Heart left ventricle (tissue), 16 donors: ENCODE measurements at regions of chr3 and their contacts with region 1.

Region 1: GRCh38 chr3:42831321-42831713 is 22.1 kb downstream of the ACKR2 start:
- DNase-seq: peak; percentile 53 to 74 (median 63)
- ATAC-seq: peak; percentile 29 to 66 (median 57)
- H3K4me3 ChIP-seq: no peak overlapping the region
- H3K27ac ChIP-seq: no peak overlapping the region
- H3K4me1 ChIP-seq: peaks cover 0 to 8% (median 0%) of the 10 kb centered on the region in 12 donors
- H3K27me3 ChIP-seq: no peaks in the 10 kb centered on the region
- CTCF ChIP-seq: peak; percentile 62 to 83 (median 73)
- POLR2A ChIP-seq: no peak

Region 2: GRCh38 chr3:42780892-42781700 is 50.2 kb before region 1 on chr3:
- intact Hi-C with region 1: loop called in 7 of 10 experiments (anchors 2 to 5 kb)
- DNase-seq: no peak
- ATAC-seq: peak in 3 of 4 donors; percentile 59 to 72 (median 70)
- H3K4me3 ChIP-seq: no peak overlapping the region
- H3K27ac ChIP-seq: peak overlapping the region in 2 of 12 donors; percentile 12 to 63
- H3K4me1 ChIP-seq: peaks cover 0 to 11% (median 3%) of the 10 kb centered on the region in 12 donors
- H3K27me3 ChIP-seq: no peaks in the 10 kb centered on the region
- CTCF ChIP-seq: peak; percentile 69 to 84 (median 78)
- POLR2A ChIP-seq: peak in 1 of 2 donors; percentile 13

Region 3: GRCh38 chr3:43132870-43133636 is 301.7 kb after region 1 on chr3:
- intact Hi-C with region 1: no loop called
- DNase-seq: no peak
- ATAC-seq: no peak
- H3K4me3 ChIP-seq: no peak overlapping the region
- H3K27ac ChIP-seq: no peak overlapping the region
- H3K4me1 ChIP-seq: no peaks in the 10 kb centered on the region
- H3K27me3 ChIP-seq: no peaks in the 10 kb centered on the region
- CTCF ChIP-seq: no peak
- POLR2A ChIP-seq: no peak